ENCODE measurements at regions of chr2 and their contacts with region 1.

Region 1: GRCh38 chr2:55391155-55391554 is 28.5 kb downstream of the CCDC88A start:
- DNase-seq: no peak
- ATAC-seq: no peak
- H3K4me3 ChIP-seq: no peak overlapping the region
- H3K27ac ChIP-seq: no peak overlapping the region
- H3K4me1 ChIP-seq: no peaks in the 10 kb centered on the region
- H3K27me3 ChIP-seq: no peaks in the 10 kb centered on the region

Region 2: GRCh38 chr2:55247025-55247424 is 144.1 kb before region 1 on chr2:
- intact Hi-C with region 1: no loop called
- DNase-seq: no peak
- ATAC-seq: no peak
- H3K4me3 ChIP-seq: no peak overlapping the region
- H3K27ac ChIP-seq: no peak overlapping the region
- H3K4me1 ChIP-seq: no peaks in the 10 kb centered on the region
- H3K27me3 ChIP-seq: no peaks in the 10 kb centered on the region

Region 3: DNA sequence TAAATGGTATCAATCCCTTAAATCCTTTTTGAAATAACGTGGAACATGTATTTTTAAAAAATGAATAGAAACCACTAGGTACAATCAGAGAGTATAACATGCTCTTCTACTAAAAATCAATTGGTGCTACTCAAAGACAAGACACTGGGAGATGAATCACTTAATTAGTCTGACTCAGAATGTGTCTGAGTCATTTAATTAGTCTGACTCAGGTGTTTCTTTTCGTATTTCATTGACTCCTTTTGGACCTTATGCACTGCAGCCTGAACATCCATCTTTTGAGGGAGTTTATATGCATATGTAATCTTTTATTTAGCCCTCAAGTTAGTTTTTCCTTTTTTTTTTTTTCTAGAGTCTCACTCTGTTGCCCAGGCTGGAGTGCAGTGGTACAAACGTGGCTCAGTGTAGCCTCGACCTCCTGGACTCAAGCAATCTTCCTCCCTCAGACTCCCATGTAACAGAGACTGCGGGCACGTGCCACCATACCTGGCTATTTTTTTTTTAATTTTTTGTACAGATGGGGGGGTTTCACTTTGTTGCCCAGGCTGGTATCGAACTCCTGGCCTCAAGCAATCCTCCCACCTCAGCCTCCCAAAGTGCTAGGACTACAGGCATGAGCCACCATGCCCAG is 199.8 kb after region 1 on chr2:
- intact Hi-C with region 1: loop called in 1 of 4 experiments (anchors 5 kb)
- DNase-seq: no peak
- ATAC-seq: no peak
- H3K4me3 ChIP-seq: no peak overlapping the region
- H3K27ac ChIP-seq: no peak overlapping the region
- H3K4me1 ChIP-seq: no peaks in the 10 kb centered on the region
- H3K27me3 ChIP-seq: no peaks in the 10 kb centered on the region